Activated CD8-positive, alpha-beta T cell treated with anti-CD3 and anti-CD28 coated beads, Interleukin-2, amount 10 ng/mL, durations not matched to agents 7 days and 5 days (primary cell): ENCODE measurements at regions of chr20 and their contacts with region 1.

Region 1: DNA sequence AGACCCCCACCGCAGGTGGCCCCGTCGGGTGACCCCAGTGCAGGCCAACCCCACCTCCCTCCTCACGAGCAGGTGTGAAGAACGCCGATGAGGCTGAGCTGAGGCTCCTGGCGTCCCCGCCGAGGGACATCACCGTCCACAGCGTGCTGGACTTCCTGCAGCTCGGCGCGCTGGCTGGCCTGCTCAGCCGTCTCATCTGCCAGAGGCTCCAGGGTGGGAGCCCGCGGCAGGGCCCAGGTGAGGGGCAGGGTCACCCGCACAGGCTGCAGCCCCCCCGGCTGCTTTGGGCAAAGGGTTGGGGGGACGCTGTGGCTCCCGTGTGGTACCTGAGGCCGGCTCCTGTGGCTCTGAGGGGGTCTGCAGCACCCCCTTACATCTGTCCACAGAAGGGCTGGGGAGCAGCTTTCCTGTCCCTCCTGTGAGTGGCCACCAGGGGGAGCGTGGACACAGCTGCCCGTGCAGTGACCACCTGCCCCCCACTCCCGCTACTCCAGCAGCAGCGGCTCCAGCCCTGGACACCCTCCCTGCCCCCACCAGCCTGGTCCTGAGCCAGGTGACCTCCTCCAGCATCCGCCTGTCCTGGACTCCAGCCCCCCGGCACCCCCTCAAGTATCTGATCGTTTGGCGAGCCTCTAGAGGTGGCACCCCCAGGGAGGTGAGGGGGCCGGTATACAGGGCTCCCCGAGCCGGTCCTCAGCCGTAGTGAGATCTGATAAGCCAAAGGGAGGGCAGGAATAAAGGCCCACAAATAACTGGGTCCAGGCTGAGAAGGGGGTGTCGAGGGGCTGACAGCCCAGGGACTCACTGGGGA is 16.5 kb downstream of the COL20A1 start:
- DNase-seq: peak; percentile 41
- ATAC-seq: no peak
- H3K4me3 Mint-ChIP-seq: no peak overlapping the region
- H3K27ac Mint-ChIP-seq: no peak overlapping the region
- H3K4me1 Mint-ChIP-seq: no peaks in the 10 kb centered on the region
- H3K27me3 Mint-ChIP-seq: no peaks in the 10 kb centered on the region

Region 2: DNA sequence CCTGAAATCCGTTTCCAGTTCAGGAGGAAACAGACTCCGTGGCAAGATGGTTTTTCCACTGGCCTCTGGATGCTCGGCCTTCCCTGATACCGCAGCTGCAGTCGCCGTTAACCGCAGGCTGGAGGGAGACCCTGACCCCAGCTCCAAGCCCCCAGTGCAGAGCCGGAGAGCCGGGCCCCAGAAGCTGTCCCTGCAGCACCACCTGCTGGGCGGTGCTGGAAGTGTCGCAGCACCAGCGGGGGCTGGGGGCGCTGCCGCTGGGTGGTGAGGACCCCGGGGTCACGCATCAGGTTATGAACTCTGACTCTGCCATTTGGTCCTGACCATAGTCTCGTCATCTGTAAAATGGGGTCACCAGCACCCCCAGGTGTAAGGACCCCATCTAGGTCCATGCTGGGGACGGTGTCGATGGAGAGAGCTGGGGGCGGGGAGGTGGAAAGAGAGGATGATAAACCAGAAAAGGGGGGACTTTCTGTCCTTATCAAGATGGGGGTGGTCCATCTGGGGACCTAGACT is 72.4 kb after region 1 on chr20:
- CTCF ChIA-PET with region 1: interaction called, 25 read pairs
- POLR2A ChIA-PET with region 1: interaction called, 3 read pairs
- DNase-seq: peak; percentile 39
- ATAC-seq: peak; percentile 61
- H3K4me3 Mint-ChIP-seq: no peak overlapping the region
- H3K27ac Mint-ChIP-seq: no peak overlapping the region
- H3K4me1 Mint-ChIP-seq: no peaks in the 10 kb centered on the region
- H3K27me3 Mint-ChIP-seq: peaks cover 4% of the 10 kb centered on the region